Activated CD4-positive, alpha-beta memory T cell treated with anti-CD3 and anti-CD28 coated beads, Interleukin-2, amount 10 ng/mL, durations not matched to agents 7 days and 5 days (primary cell): ENCODE measurements at regions of chr12 and their contacts with region 1.

Region 1: GRCh38 chr12:4303750-4304149 is 17.3 kb upstream of the TIGAR start:
- DNase-seq: no peak
- H3K4me3 Mint-ChIP-seq: no peak overlapping the region
- H3K27ac Mint-ChIP-seq: peak overlapping the region; percentile 60
- H3K4me1 Mint-ChIP-seq: peaks cover 16% of the 10 kb centered on the region
- H3K27me3 Mint-ChIP-seq: no peaks in the 10 kb centered on the region

Region 2: DNA sequence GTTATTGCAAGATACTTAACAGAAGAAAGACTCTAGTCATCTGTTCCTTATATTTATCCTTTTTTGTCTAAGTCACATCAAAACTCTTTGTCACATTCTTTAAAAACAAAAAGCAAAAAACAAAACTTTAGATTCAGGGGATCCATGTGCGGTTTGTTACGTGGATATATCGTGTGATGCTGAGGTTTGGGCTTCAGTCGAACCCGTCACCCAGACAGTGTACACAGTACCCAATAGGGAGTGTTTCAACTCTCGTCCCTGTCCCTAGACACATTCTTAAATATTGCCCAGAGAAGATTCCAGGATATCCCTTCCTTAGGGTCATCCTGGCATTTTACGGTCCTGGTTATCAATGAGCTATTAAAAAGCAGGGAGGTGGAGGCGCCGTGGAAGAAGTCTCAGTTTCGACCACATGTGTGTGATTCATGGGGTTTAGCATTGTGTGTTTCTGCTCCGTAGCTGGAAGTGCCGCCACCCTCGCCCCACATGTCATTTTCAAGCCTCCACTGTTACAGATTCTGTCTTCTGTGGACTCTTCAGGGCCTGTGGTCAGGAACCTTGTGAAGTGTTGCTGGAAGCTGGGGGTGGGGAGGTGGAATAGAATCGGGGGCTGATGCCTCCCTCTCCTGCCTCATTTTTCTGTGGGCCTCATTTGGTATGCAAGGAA is 10.3 kb before region 1 on chr12:
- CTCF ChIA-PET with region 1: no interaction called
- POLR2A ChIA-PET with region 1: interaction called, 10 read pairs
- DNase-seq: peak; percentile 61
- H3K4me3 Mint-ChIP-seq: peak overlapping the region; percentile 46
- H3K27ac Mint-ChIP-seq: peak overlapping the region; percentile 83
- H3K4me1 Mint-ChIP-seq: peaks cover 74% of the 10 kb centered on the region
- H3K27me3 Mint-ChIP-seq: no peaks in the 10 kb centered on the region

Region 3: DNA sequence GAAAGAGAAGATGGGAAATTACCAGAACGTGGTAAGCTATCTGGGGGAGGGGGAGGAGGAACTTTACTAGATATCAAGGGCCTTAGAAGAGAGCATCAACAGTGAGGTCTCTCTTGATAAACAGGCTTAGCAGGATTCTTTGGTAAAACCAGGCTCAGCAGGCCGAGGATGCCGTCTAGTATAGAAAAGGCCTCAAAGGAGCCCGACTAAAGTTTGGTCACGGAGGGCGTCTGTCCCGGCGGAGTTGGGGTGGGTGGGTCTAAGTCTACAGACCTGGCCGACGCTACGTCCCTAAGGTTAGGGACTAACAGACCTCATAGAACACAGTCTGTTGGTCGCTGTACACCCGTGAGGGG is 16.7 kb after region 1 on chr12:
- CTCF ChIA-PET with region 1: no interaction called
- POLR2A ChIA-PET with region 1: interaction called, 13 read pairs
- DNase-seq: no peak
- H3K4me3 Mint-ChIP-seq: peak overlapping the region; percentile 85
- H3K27ac Mint-ChIP-seq: peak overlapping the region; percentile 85
- H3K4me1 Mint-ChIP-seq: peaks cover 40% of the 10 kb centered on the region
- H3K27me3 Mint-ChIP-seq: no peaks in the 10 kb centered on the region